Mammary epithelial cell (primary cell): ENCODE measurements at regions of chr2 and their contacts with region 1.

Region 1: GRCh38 chr2:1550658-1551316 is 137.5 kb downstream of the TPO start:
- DNase-seq: peak; percentile 33
- H3K4me3 ChIP-seq: no peak overlapping the region
- H3K27ac ChIP-seq: no peak overlapping the region
- H3K4me1 ChIP-seq: peaks cover 6% of the 10 kb centered on the region
- H3K27me3 ChIP-seq: no peaks in the 10 kb centered on the region
- CTCF ChIP-seq: peak; percentile 78 to 94

Region 2: GRCh38 chr2:290090-290722 is 1260.6 kb before region 1 on chr2:
- CTCF ChIA-PET with region 1: no interaction called
- dilution Hi-C with region 1: no loop called
- in situ Hi-C with region 1: no loop called
- intact Hi-C with region 1: loop called (anchors 10 kb)
- DNase-seq: peak; percentile 40
- H3K4me3 ChIP-seq: peak overlapping the region; percentile 40 to 45 (median 45)
- H3K27ac ChIP-seq: no peak overlapping the region
- H3K4me1 ChIP-seq: peaks cover 8% of the 10 kb centered on the region
- H3K27me3 ChIP-seq: peaks cover 9% of the 10 kb centered on the region
- CTCF ChIP-seq: peak; percentile 62 to 82

Region 3: DNA sequence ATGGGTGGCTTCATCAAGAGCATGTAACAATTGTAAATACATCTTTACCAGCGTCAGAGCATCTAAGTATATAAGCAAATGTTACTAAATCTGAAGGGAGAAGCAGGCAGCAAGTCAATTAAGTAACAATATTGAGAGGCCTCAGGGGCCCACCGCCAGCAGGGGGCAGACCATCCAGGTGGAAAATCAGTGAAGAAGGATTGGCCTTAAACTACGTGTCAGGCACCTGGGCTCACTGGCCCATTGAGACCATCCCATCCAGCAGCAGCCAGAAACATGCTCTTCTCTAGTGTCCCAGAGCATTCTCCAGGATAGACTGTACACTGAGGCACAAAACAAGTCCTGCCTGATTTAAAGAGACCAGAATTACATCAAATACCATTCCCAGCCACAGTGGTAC is 696.3 kb before region 1 on chr2:
- CTCF ChIA-PET with region 1: no interaction called
- dilution Hi-C with region 1: no loop called
- in situ Hi-C with region 1: no loop called
- intact Hi-C with region 1: loop called (anchors 2 kb)
- DNase-seq: no peak
- H3K4me3 ChIP-seq: no peak overlapping the region
- H3K27ac ChIP-seq: no peak overlapping the region
- H3K4me1 ChIP-seq: no peaks in the 10 kb centered on the region
- H3K27me3 ChIP-seq: no peaks in the 10 kb centered on the region
- CTCF ChIP-seq: peak in 1 of 2 donors; percentile 22

Region 4: GRCh38 chr2:1455466-1455865 is 95.3 kb before region 1 on chr2:
- CTCF ChIA-PET with region 1: no interaction called
- dilution Hi-C with region 1: no loop called
- in situ Hi-C with region 1: no loop called
- intact Hi-C with region 1: no loop called
- DNase-seq: no peak
- H3K4me3 ChIP-seq: no peak overlapping the region
- H3K27ac ChIP-seq: no peak overlapping the region
- H3K4me1 ChIP-seq: no peaks in the 10 kb centered on the region
- H3K27me3 ChIP-seq: no peaks in the 10 kb centered on the region
- CTCF ChIP-seq: no peak

Region 5: GRCh38 chr2:1567556-1568344 is 17.0 kb after region 1 on chr2:
- CTCF ChIA-PET with region 1: no interaction called
- dilution Hi-C with region 1: no loop called
- in situ Hi-C with region 1: no loop called
- intact Hi-C with region 1: no loop called
- DNase-seq: no peak
- H3K4me3 ChIP-seq: no peak overlapping the region
- H3K27ac ChIP-seq: no peak overlapping the region
- H3K4me1 ChIP-seq: peaks cover 15% of the 10 kb centered on the region
- H3K27me3 ChIP-seq: no peaks in the 10 kb centered on the region
- CTCF ChIP-seq: no peak

Region 6: DNA sequence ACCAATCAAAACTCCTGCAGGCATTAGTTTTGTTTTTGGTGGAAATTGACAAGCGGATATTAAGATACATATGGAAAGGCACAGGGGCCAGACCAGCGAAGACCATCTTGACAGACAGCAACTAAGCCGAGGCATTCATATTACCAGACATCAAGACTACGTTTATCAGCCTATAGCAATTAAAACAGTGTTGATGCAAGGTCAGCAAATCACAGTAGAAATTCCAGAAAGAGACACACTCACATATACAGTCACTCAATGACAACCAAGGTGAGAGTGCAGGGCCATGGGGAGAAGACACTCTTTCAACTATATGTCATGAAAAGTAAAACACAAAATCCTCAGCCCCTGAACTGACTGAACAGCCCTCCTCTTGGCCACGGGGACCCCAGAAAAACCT is 27.1 kb after region 1 on chr2:
- CTCF ChIA-PET with region 1: interaction called, 4 read pairs
- dilution Hi-C with region 1: no loop called
- in situ Hi-C with region 1: no loop called
- intact Hi-C with region 1: loop called (anchors 2 kb)
- DNase-seq: no peak
- H3K4me3 ChIP-seq: no peak overlapping the region
- H3K27ac ChIP-seq: no peak overlapping the region
- H3K4me1 ChIP-seq: peaks cover 21% of the 10 kb centered on the region
- H3K27me3 ChIP-seq: peaks cover 3% of the 10 kb centered on the region
- CTCF ChIP-seq: no peak

Region 7: DNA sequence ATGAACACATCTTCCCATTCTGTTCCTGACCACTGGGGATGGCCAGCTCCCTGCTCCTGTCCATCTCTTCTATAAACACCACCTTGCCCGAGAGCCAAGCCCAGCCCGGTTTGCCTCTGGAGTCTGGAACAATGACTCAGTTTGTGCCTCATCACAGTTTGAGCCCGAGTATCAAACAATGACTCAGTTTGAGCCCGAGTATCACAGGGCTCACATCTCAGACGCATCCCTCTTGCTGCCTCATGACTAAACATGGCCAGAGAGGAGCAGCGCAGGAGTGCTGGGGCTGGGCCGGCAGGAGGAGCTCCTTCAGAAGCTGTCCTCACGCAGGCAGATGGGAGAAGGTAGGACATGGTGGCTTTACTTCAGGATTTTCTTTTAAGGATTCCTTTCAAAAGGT is 124.8 kb after region 1 on chr2:
- CTCF ChIA-PET with region 1: no interaction called
- dilution Hi-C with region 1: no loop called
- in situ Hi-C with region 1: no loop called
- intact Hi-C with region 1: loop called (anchors 5 kb)
- DNase-seq: peak; percentile 99
- H3K4me3 ChIP-seq: no peak overlapping the region
- H3K27ac ChIP-seq: peak overlapping the region; percentile 84
- H3K4me1 ChIP-seq: peaks cover 20% of the 10 kb centered on the region
- H3K27me3 ChIP-seq: no peaks in the 10 kb centered on the region
- CTCF ChIP-seq: peak; percentile 62 to 83

Region 8: DNA sequence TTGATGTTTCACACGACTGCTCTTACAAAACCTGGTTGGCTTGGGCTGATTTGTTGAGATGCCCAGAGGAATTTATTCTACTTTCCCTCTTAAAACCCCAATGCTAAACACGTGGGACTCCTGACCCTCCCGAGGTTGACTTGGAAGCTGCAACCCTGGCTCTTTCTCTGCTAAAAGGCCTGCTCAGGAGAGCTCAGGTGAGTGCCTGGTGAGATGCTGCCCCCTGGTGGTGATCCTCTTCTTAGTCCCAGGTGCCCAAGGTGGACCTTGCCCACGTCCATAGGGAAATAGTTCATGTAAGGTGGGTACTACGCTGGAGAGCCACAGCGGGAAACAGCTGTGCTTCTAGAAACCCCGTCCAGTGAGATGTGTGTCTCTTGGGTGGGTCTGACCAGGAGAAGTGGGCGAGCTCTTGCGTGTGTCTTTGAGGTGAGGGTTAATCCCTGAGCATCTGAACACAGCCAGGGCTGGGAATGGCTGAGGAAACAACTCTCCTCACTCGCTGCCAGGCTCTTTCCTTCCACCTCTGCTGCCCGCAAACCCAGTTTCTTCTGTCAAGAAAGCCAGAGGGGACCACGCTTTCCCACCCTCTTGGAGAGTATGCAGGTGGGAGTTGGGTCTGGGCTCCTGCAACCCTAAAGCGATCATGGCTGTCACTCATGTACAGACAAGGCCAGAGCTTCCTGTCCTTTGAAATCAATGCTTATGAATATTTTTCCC is 219.1 kb after region 1 on chr2:
- CTCF ChIA-PET with region 1: interaction called, 4 read pairs
- dilution Hi-C with region 1: no loop called
- in situ Hi-C with region 1: no loop called
- intact Hi-C with region 1: loop called (anchors 1 kb)
- DNase-seq: peak; percentile 53
- H3K4me3 ChIP-seq: no peak overlapping the region
- H3K27ac ChIP-seq: no peak overlapping the region
- H3K4me1 ChIP-seq: no peaks in the 10 kb centered on the region
- H3K27me3 ChIP-seq: no peaks in the 10 kb centered on the region
- CTCF ChIP-seq: peak; percentile 91 to 92